BJ (cell line): ENCODE measurements at regions of chr5 and their contacts with region 1.

Region 1: GRCh38 chr5:177086924-177087706 is 400 bp downstream of the FGFR4 start:
- DNase-seq: no peak
- H3K4me3 ChIP-seq: peak overlapping the region; percentile 40
- H3K27me3 ChIP-seq: peaks cover 14% of the 10 kb centered on the region; the same call in 1 of the 2 replicates
- CTCF ChIP-seq: peak; percentile 40

Region 2: GRCh38 chr5:176955895-176956294 is 131.2 kb before region 1 on chr5:
- CTCF ChIA-PET with region 1: no interaction called
- POLR2A ChIA-PET with region 1: no interaction called
- DNase-seq: no peak
- H3K4me3 ChIP-seq: no peak overlapping the region
- H3K27me3 ChIP-seq: no peaks in the 10 kb centered on the region
- CTCF ChIP-seq: no peak

Region 3: DNA sequence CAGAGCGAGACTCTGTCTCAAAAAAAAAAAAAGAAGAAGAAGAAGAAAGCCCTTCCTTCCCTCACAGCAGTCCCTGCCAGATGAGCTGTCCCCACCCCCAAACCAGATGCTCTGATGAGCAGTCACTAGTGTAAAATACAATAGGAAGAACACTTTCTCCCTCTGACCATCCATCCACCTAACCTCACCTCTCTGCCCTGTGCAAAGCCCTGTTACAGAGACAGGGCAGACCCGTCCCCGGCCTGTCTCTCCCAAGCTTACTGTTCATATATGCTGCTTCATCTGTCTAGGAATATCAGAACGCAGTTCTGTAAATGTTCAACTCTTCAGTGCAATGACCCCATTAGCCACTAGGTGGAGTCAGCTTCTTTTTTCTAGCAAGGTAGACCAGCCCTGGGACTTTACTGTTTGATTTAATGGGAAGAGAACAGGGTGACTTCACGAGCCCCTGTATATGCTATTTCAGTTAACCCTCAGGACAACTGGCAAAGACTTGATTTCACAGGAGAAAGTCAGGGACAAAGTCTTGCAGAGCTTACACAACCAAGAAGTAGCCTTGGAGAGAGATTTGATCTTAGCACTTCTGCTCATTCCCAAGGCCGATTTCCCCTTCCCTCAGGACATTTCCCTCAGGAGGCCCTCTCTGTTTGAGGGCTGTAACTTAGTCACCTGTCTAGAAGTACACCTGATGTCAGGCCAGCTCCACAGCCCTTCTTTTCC is 15.3 kb before region 1 on chr5:
- CTCF ChIA-PET with region 1: interaction called, 62 read pairs
- POLR2A ChIA-PET with region 1: no interaction called
- DNase-seq: peak; percentile 49
- H3K4me3 ChIP-seq: peak overlapping the region; percentile 17; the same call in 1 of the 2 replicates
- H3K27me3 ChIP-seq: no peaks in the 10 kb centered on the region
- CTCF ChIP-seq: peak; percentile 91

Region 4: DNA sequence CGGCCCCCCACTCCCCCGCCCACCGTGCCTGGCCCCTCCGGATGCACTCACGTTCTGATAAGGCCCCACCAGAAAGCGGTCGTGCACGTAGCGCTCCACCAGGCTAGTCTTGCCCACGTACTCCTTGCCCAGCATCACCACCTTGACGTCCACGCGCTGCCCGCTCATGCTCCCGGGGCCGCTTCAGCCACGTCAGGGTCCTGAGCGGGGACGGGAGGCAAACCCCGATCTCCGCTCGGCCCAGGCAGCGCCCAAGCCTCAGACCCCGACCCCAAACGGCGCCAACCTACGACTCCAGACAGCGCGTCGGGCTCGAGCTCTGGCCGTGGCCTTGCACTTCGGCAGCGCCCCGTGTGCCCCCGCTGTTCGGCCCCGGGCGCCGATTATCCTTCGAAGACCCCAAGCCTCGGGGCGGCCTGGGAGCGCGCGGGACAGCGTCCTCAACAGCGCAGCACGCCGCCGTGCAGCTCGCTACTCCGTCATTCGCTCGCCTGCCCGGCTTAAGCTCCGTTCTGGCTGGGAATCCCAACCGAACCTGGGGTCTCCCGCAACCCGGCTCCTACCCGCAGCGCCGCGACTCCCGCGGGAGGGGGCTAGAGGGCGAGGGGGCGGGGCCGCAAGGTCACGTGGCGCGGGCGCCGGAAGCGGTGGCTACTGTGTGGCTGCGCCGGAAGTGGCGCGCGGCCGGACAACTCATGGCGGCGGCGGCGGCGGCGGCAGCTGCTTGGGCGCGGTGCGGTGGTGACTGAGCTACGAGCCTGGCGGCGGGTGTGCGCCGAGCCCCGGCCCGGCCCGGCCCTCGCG is 216.2 kb after region 1 on chr5 and contains the starts of genes PRELID1 and RAB24:
- CTCF ChIA-PET with region 1: no interaction called
- POLR2A ChIA-PET with region 1: no interaction called
- DNase-seq: no peak
- H3K4me3 ChIP-seq: peak within 1 kb of the TSS; percentile 71
- H3K27me3 ChIP-seq: no peaks in the 10 kb centered on the region
- CTCF ChIP-seq: peak; percentile 44
- polyA plus RNA-seq, gene PRELID1: 182 and 245 TPM in 2 replicates
- polyA plus RNA-seq, gene RAB24: 39.7 and 54.7 TPM in 2 replicates